SK-N-SH (cell line): ENCODE measurements at regions of chr7 and their contacts with region 1.

Region 1: GRCh38 chr7:45217358-45217757 is 59.8 kb downstream of the RAMP3 start:
- DNase-seq: peak; percentile 65
- H3K4me3 ChIP-seq: no peak overlapping the region
- H3K27ac ChIP-seq: no peak overlapping the region
- H3K4me1 ChIP-seq: peaks cover 0 to 36% of the 10 kb centered on the region in 2 experiments; a peak in 1 of 4 replicates
- H3K27me3 ChIP-seq: peaks cover 32% of the 10 kb centered on the region
- CTCF ChIP-seq: peak; percentile 41
- EP300 ChIP-seq: no peak
- RAD21 ChIP-seq: peak; percentile 53

Region 2: GRCh38 chr7:45157653-45158401 is 59.5 kb before region 1 on chr7 and contains the start of gene RAMP3:
- CTCF ChIA-PET with region 1: interaction called, 22 read pairs
- POLR2A ChIA-PET with region 1: no interaction called
- DNase-seq: peak; percentile 88
- H3K4me3 ChIP-seq: peak within 1 kb of the TSS in 1 of 2 experiments; percentile 35; a peak in 1 of 4 replicates
- H3K27ac ChIP-seq: no peak within 1 kb of the TSS
- H3K4me1 ChIP-seq: peaks cover 0 to 14% of the 10 kb centered on the region in 2 experiments; a peak in 1 of 4 replicates
- H3K27me3 ChIP-seq: peaks cover 29% of the 10 kb centered on the region
- CTCF ChIP-seq: no peak
- EP300 ChIP-seq: no peak
- RAD21 ChIP-seq: no peak
- polyA plus RNA-seq, gene RAMP3: not detected in 2 replicates

Region 3: DNA sequence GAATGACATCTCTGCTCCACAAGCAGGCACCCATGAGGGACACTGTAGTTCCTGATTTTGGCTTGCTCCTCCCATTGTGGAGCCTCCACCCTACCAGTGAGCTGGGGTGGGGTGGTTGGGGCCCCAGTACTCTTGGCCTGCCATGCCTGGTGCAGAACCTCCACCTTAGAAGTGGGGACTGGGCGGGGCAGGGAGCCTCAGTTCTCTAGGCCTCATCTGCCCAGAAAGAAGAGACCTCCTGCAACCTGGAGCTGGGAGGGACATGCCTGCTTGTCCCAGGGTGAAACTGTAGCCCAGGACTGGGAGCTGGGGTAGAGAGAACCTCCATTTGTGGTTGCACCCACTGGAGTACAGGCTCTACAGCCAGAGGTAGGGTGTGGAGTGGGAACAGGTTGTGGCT is 45.4 kb before region 1 on chr7:
- CTCF ChIA-PET with region 1: no interaction called
- POLR2A ChIA-PET with region 1: no interaction called
- DNase-seq: no peak
- H3K4me3 ChIP-seq: no peak overlapping the region
- H3K27ac ChIP-seq: no peak overlapping the region
- H3K4me1 ChIP-seq: no peaks in the 10 kb centered on the region
- H3K27me3 ChIP-seq: 0 out of 2 replicates have a peak, but pooled peaks cover 23% of the 10 kb centered on the region
- CTCF ChIP-seq: no peak
- EP300 ChIP-seq: no peak
- RAD21 ChIP-seq: no peak

Region 4: DNA sequence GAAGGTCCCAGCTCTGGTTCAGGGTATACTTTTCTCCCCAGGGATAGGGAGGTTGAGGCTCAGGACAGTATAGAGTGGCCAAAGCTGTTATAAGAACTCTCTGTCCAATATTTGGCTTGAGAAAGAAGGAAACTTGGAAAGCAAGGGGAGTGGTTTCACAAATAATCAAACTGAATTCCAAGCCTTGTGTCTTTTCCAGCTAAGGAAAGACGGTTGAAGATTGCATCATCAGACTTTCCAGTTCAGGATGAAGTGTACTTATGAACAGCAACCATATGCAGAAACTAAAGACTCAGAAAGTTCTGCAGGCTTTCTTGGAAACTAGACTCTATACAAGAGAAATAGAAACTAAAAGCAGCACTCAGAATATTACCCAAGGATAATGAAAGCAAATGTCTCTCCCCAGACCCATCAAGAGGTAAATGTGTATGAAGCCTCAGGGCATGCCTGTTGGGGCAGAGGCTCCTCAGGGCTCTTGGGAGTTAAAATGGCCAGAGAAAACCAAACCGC is 13.4 kb before region 1 on chr7:
- CTCF ChIA-PET with region 1: interaction called, 19 read pairs
- POLR2A ChIA-PET with region 1: interaction called, 3 read pairs
- DNase-seq: no peak
- H3K4me3 ChIP-seq: no peak overlapping the region
- H3K27ac ChIP-seq: no peak overlapping the region
- H3K4me1 ChIP-seq: no peaks in the 10 kb centered on the region
- H3K27me3 ChIP-seq: peaks cover 37% of the 10 kb centered on the region
- CTCF ChIP-seq: no peak
- EP300 ChIP-seq: no peak
- RAD21 ChIP-seq: no peak

Region 5: DNA sequence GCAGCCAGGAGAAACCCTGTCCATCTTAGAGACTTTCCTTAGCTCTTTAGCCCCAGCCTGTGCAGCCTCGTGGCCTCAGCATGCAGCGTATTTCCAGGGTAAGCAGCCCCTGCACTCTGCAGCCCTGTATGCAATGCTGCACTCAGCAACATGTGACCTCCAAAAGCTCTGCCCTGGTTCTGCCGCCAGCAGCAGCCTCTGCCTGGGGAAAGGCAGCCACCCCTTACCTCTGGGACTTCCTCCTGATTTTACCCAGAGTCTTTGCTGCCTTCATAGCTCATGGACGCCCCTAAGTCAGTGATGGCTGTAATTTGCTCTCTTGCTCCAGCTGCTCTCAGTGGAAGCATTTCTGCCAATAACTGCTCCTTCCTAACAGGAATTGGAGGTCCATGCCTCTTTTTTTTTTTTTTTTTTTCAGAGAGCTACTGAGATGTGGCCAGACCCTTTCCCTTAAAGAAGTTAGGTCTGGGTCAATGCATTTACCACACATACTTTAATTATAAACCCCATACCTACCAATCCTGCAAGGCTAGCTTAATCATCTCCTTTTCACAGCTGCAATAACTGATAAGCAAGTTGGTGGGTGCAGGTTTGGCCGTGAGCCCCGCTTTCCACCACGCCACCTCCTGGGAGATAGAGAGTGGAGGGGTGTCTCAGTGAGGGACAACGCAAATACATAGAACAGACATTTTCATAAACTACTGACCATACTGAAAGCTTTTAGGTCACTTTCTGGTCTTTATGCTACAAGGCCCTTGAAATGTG is 12.0 kb after region 1 on chr7:
- CTCF ChIA-PET with region 1: interaction called, 30 read pairs
- POLR2A ChIA-PET with region 1: interaction called, 3 read pairs
- DNase-seq: peak; percentile 53
- H3K4me3 ChIP-seq: no peak overlapping the region
- H3K27ac ChIP-seq: no peak overlapping the region
- H3K4me1 ChIP-seq: peaks cover 0 to 22% of the 10 kb centered on the region in 2 experiments; a peak in 2 of 4 replicates
- H3K27me3 ChIP-seq: peaks cover 42% of the 10 kb centered on the region
- CTCF ChIP-seq: no peak
- EP300 ChIP-seq: no peak
- RAD21 ChIP-seq: no peak

Region 6: GRCh38 chr7:45252857-45253256 is 35.5 kb after region 1 on chr7:
- CTCF ChIA-PET with region 1: interaction called, 18 read pairs
- POLR2A ChIA-PET with region 1: no interaction called
- DNase-seq: no peak
- H3K4me3 ChIP-seq: no peak overlapping the region
- H3K27ac ChIP-seq: no peak overlapping the region
- H3K4me1 ChIP-seq: no peaks in the 10 kb centered on the region; a peak in 1 of 4 replicates
- H3K27me3 ChIP-seq: peaks cover 4% of the 10 kb centered on the region; the same call in 1 of the 2 replicates
- CTCF ChIP-seq: no peak
- EP300 ChIP-seq: no peak
- RAD21 ChIP-seq: no peak

Region 7: DNA sequence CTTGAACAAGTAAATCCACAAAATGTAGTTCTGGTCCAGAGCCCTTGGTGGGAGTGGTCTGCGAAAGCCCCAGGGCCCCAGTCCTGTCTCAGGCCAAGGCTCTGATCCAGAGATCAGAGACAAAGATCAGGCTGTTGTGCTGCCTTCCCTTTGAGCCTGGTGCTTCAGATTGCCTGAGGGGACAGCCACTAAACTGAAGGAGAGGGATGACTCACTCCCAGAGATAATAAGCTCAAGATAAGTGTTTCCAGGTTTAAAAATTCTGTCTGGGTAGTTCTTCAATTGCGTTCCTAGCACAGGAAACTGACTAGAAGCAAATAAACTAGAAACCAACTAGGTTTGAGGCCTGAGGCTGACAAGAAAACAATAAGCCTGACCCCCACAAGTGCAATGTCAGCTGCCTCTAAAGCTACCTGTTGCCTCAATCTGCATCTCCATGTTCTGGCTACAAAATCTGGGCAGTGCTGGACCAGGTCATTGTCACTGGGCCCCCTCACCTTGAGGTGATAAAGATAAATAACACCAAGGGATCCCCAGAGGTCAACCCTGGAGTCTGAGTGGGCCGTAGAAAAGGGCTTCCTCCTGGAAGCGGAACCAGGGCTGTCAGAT is 130.6 kb after region 1 on chr7:
- CTCF ChIA-PET with region 1: no interaction called
- POLR2A ChIA-PET with region 1: no interaction called
- DNase-seq: peak; percentile 85
- H3K4me3 ChIP-seq: no peak overlapping the region
- H3K27ac ChIP-seq: peak overlapping the region in 1 of 2 experiments; percentile 100; a peak in 2 of 4 replicates
- H3K4me1 ChIP-seq: peaks cover 0 to 39% of the 10 kb centered on the region in 2 experiments; a peak in 2 of 4 replicates
- H3K27me3 ChIP-seq: no peaks in the 10 kb centered on the region
- CTCF ChIP-seq: no peak
- EP300 ChIP-seq: peak in 1 of 2 experiments; percentile 99; a peak in 2 of 4 replicates
- RAD21 ChIP-seq: peak; percentile 45; the same call in 1 of the 2 replicates

Region 8: DNA sequence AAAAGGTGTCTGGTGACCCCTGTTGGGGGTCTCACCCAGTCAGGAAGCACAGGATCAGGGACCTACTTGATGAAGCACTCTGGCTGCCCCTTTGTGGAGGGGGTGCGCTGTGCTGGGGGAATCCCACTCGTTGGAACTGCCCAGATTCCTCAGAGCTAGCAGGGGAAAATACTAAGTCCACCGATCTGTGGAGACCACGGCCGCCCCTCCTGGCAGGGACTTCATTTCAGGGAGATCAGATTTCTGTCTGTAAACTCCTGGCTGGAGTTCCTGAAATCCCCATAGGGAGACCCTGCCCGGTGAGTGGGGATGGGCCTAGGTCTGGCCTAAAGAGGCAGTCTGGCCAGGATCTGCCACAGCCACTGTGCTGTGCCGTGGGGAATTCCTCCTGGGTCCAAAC is 277.5 kb after region 1 on chr7:
- CTCF ChIA-PET with region 1: no interaction called
- POLR2A ChIA-PET with region 1: no interaction called
- DNase-seq: no peak
- H3K4me3 ChIP-seq: no peak overlapping the region
- H3K27ac ChIP-seq: no peak overlapping the region
- H3K4me1 ChIP-seq: no peaks in the 10 kb centered on the region
- H3K27me3 ChIP-seq: no peaks in the 10 kb centered on the region
- CTCF ChIP-seq: no peak
- EP300 ChIP-seq: no peak
- RAD21 ChIP-seq: no peak